Aorta (tissue), 5 donors: ENCODE measurements at regions of chr15 and their contacts with region 1.

Region 1: DNA sequence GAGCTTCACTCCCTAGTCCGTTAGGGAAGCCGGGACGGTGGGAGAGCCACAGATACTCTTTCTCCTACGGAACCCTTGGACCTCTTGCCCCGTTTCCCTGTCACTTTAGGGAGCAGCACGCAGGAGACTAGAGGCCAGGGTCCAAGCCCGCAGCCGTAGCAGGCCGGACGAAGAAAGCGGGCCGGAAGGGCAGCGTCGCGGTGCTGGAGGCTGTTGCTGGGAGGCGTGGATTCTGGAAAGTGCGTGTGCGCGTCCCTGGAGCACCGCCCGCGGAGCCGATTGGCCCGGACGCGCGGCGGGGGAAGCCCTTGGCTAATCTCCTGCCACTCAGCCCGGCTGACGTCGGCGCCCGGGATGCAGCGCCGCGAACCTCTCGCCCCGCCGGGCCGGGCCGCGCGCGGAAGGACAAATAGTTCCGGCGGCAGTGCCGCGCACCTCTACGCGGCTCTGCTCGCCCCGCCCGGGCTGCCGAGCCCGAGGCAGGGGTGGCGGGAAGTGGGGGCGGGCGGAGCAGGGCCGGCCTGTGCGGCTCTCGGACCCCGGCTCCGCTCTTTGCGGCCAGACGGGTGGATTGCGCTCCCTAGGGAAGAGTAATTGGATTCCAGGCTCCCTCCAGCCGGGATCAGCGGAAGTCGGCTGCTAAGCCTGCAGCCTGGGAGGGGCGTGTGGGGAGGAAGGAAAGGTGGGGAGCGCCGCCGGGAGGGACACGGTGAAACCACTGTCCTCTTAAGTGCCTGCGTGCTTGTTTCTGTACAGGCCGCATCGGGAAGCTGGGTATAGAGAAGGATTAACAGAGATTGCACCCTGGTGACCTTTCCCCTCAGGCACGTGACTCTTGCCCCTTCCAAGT is 31.3 kb upstream of the TCF12 start:
- DNase-seq: peak; percentile 96 to 97
- ATAC-seq: peak; percentile 98
- H3K4me3 ChIP-seq: peak overlapping the region; percentile 38 to 58
- H3K27ac ChIP-seq: peak overlapping the region; percentile 88 to 98
- H3K4me1 ChIP-seq: no peaks in the 10 kb centered on the region
- H3K27me3 ChIP-seq: no peaks in the 10 kb centered on the region

Region 2: GRCh38 chr15:56732921-56733797 is 154.0 kb before region 1 on chr15 and contains the start of gene ZNF280D:
- intact Hi-C with region 1: loop called in 1 of 2 experiments (anchors 5 kb)
- DNase-seq: peak; percentile 95 to 96
- ATAC-seq: peak; percentile 95
- H3K4me3 ChIP-seq: peak within 1 kb of the TSS; percentile 74 to 86
- H3K27ac ChIP-seq: peak within 1 kb of the TSS; percentile 96 to 100
- H3K4me1 ChIP-seq: peaks cover 3 to 4% of the 10 kb centered on the region in 2 donors
- H3K27me3 ChIP-seq: no peaks in the 10 kb centered on the region
- total RNA-seq, gene ZNF280D: 64.4 to 90.8 TPM

Region 3: GRCh38 chr15:56821721-56822425 is 65.3 kb before region 1 on chr15:
- intact Hi-C with region 1: loop called in 1 of 2 experiments (anchors 10 kb)
- DNase-seq: peak; percentile 68 to 78
- ATAC-seq: peak; percentile 63
- H3K4me3 ChIP-seq: no peak overlapping the region
- H3K27ac ChIP-seq: no peak overlapping the region
- H3K4me1 ChIP-seq: peaks cover 0 to 3% of the 10 kb centered on the region in 2 donors
- H3K27me3 ChIP-seq: no peaks in the 10 kb centered on the region

Region 4: GRCh38 chr15:56906771-56907170 is 19.6 kb after region 1 on chr15:
- intact Hi-C with region 1: no loop called
- DNase-seq: no peak
- ATAC-seq: no peak
- H3K4me3 ChIP-seq: no peak overlapping the region
- H3K27ac ChIP-seq: no peak overlapping the region
- H3K4me1 ChIP-seq: no peaks in the 10 kb centered on the region
- H3K27me3 ChIP-seq: no peaks in the 10 kb centered on the region

Region 5: DNA sequence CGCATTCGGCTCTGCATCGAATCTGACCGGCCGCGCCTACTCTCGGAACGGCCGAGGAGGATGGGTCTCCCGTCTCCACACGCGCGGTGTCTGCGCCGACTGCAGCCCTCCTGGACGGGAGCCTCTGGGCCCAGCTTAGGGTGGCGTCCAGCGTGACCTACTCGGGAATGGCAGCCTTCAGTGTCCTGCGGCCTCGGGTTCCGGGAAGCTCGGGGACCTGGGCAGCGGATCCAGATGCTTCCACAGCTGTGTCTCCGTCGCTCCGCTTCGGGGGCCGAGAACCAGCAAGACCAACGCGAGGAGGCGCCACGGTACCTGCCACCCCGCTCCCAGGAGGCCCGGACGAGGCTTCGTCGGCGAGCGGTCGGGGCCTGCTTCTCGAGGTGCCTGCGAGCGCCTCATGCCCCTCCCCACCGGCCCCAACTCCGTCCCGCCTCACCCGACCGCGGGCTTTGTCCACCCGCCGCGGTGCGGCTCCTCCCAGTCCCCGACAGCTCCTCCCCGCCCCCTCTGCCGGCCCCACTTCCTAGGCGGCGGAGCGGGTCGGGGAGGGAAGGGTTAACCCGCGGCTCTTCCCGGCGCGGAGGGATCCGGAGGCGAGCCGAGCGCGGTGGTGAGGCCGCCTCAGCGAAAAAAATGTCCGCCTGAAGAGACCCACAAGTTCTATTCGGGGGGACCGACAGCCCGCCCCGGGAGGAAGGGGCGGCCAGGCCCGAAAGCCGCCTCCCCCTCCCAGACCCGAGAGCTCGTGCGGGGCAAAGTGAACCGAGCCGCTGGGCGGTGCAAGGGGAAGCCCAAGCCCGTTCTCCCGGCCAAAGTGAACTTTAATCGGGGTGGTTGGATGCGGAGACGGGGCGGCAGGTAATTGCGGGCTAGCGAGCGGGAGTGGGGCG is 31.1 kb after region 1 on chr15 and contains the start of gene TCF12:
- intact Hi-C with region 1: loop called (anchors 1 kb)
- DNase-seq: peak; percentile 97 to 99
- ATAC-seq: peak; percentile 97
- H3K4me3 ChIP-seq: peak within 1 kb of the TSS; percentile 90 to 92
- H3K27ac ChIP-seq: peak within 1 kb of the TSS; percentile 20 to 91
- H3K4me1 ChIP-seq: peaks cover 0 to 8% of the 10 kb centered on the region in 2 donors
- H3K27me3 ChIP-seq: no peaks in the 10 kb centered on the region
- total RNA-seq, gene TCF12: 102 to 158 TPM